ENCODE measurements at regions of chr7 and their contacts with region 1.

Region 1: DNA sequence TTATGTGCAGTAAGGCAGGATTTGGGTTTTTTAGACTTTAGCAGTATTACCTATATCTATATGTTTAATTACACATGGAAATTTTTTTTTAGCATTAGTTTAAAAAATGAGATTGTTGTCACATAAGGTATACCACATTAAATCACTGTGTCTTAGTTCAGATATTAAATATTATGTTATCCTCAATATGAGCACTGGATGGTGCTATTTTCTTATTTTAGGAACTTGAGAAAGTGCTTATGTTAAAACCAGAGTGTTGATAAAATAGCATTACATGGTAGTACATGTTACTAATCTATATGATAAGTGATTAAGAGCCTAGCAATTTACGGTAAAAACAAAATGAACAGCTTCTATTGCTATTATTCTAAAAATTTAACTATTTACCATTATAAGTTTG is 28.8 kb downstream of the MIOS start:
- DNase-seq: no peak
- ATAC-seq: peak in 1 of 8 donors; percentile 41
- H3K4me3 ChIP-seq: no peak overlapping the region
- H3K27ac ChIP-seq: no peak overlapping the region
- H3K4me1 ChIP-seq: no peaks in the 10 kb centered on the region
- H3K27me3 ChIP-seq: no peaks in the 10 kb centered on the region
- CTCF ChIP-seq: peak in 7 of 9 donors; percentile 38 to 60 (median 48)

Region 2: GRCh38 chr7:7529328-7529727 is 66.1 kb before region 1 on chr7:
- intact Hi-C with region 1: no loop called
- DNase-seq: no peak
- ATAC-seq: no peak
- H3K4me3 ChIP-seq: no peak overlapping the region
- H3K27ac ChIP-seq: no peak overlapping the region
- H3K4me1 ChIP-seq: no peaks in the 10 kb centered on the region
- H3K27me3 ChIP-seq: peaks cover 0 to 5% (median 0%) of the 10 kb centered on the region in 7 donors
- CTCF ChIP-seq: no peak

Region 3: DNA sequence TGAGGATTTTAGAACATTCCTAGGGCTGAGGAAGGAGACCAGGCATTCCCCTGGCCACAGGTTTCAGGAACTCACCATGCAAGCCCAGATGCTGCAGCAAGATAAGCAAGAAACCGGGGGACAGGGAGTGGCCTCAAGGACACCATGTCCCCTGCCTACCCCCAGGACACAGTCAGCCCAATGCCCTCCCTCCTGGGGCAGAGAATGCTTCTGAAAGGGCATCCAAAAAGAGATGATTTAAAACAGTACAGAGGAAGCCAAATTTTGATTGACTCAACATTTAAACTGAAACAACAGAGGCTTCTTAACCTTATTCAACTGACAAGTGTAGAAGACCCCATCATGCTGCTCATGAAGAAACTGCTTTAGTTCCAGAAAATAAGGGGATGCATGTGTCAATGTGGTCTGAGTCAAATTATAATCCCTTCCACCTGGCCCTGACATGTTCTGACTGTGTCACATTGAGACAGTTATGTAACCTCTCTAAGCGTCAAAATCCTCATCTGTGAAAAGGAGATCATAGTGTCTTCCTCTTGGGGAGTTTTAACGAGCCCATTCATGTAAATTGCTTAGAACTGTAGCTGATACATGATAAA is 606.5 kb after region 1 on chr7:
- intact Hi-C with region 1: loop called in 1 of 10 experiments (anchors 10 kb)
- DNase-seq: no peak
- ATAC-seq: peak in 5 of 8 donors; percentile 42 to 81 (median 55)
- H3K4me3 ChIP-seq: no peak overlapping the region
- H3K27ac ChIP-seq: peak overlapping the region in 3 of 10 donors; percentile 15 to 29 (median 21)
- H3K4me1 ChIP-seq: peaks cover 0 to 29% (median 17%) of the 10 kb centered on the region in 9 donors
- H3K27me3 ChIP-seq: no peaks in the 10 kb centered on the region
- CTCF ChIP-seq: no peak

Region 4: DNA sequence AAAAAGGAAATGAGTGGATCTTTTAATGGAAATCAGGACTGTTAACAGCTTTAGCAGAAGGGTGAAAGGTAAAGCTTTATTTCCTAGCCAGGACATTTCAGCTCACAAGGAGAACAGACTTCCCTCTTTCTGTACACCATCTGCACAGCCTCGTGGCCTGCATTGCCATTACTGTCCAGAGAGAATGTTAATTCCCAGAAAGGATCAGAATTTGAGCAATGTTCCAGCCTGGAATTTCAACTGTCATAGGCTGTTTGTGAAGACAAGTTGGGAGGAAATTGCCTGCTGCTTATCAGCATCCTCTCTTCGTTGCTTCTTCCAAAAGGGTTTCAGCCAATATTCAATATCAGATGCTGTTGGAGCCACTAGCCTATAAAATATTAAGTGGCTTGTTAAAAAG is 860.0 kb after region 1 on chr7:
- intact Hi-C with region 1: no loop called
- DNase-seq: no peak
- ATAC-seq: no peak
- H3K4me3 ChIP-seq: no peak overlapping the region
- H3K27ac ChIP-seq: no peak overlapping the region
- H3K4me1 ChIP-seq: no peaks in the 10 kb centered on the region
- H3K27me3 ChIP-seq: peaks cover 0 to 10% (median 0%) of the 10 kb centered on the region in 7 donors
- CTCF ChIP-seq: no peak